ENCODE measurements at regions of chr5 and their contacts with region 1.

Region 1: GRCh38 chr5:683551-684481 is 9.3 kb downstream of the TPPP start:
- DNase-seq: peak in 2 of 9 experiments; percentile 18 to 41
- ATAC-seq: no peak
- H3K4me3 ChIP-seq: no peak overlapping the region
- H3K4me3 Mint-ChIP-seq: no peak overlapping the region
- H3K27ac ChIP-seq: no peak overlapping the region
- H3K27ac Mint-ChIP-seq: no peak overlapping the region
- H3K4me1 ChIP-seq: no peaks in the 10 kb centered on the region
- H3K4me1 Mint-ChIP-seq: no peaks in the 10 kb centered on the region
- H3K27me3 ChIP-seq: no peaks in the 10 kb centered on the region
- H3K27me3 Mint-ChIP-seq: peaks cover 5% of the 10 kb centered on the region
- CTCF ChIP-seq: no peak

Region 2: GRCh38 chr5:392431-392988 is 291.3 kb before region 1 on chr5:
- CTCF ChIA-PET with region 1: no interaction called
- POLR2A ChIA-PET with region 1: no interaction called
- intact Hi-C with region 1: no loop called
- DNase-seq: peak; percentile 10 to 90 (median 62)
- ATAC-seq: peak; percentile 87
- H3K4me3 ChIP-seq: peak overlapping the region in 1 of 2 experiments; percentile 31
- H3K4me3 Mint-ChIP-seq: peak overlapping the region; percentile 76
- H3K27ac ChIP-seq: no peak overlapping the region
- H3K27ac Mint-ChIP-seq: peak overlapping the region; percentile 74
- H3K4me1 ChIP-seq: peaks cover 12% of the 10 kb centered on the region
- H3K4me1 Mint-ChIP-seq: peaks cover 22% of the 10 kb centered on the region
- H3K27me3 ChIP-seq: no peaks in the 10 kb centered on the region
- H3K27me3 Mint-ChIP-seq: peaks cover 2% of the 10 kb centered on the region
- CTCF ChIP-seq: no peak

Region 3: DNA sequence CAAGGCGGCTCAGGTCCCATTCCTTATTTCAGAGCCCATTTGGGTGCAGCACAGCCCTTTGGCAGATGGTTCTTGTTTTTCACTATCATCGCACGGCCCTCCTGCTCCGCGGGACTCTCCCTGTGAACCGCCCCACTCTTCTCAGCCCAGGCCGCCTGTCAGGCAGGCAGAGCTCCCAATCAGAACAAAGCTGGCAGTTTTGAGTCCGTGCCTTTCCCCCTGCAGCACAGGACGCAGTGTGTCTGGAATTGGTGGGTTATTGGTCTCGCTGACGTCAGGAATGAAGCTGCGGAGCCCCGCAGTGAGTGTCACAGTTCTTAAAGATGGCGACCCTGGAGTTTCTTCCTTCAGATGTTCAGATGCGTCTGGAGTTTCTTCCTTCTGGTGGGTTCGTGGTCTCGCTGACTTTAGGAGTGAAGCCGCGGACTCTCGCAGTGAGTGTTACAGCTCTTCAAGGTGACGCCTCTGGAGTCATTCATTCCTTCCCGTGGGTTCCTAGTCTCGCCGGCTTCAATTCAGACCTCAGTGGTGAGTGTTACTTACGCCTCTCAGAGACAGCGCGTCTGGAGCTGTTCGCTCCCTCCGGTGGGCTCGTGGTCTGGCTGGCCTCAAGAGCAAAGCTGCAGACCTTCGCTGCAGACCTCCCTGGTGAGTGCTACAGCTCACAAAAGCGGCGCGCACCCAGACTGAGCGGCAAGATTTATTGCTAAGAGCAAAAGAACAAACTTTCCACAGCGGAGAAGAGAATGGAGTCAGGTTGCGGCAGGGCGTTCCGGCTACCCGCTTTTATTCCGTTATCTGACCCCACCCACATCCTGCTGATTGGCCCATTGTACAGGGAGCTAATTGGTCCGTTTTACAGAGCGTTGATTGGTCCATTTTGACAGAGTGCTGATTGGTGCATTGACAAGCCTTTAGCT is 93.2 kb after region 1 on chr5:
- CTCF ChIA-PET with region 1: no interaction called
- POLR2A ChIA-PET with region 1: no interaction called
- intact Hi-C with region 1: loop called in 1 of 2 experiments (anchors 5 kb)
- DNase-seq: peak in 1 of 9 experiments; percentile 13
- ATAC-seq: no peak
- H3K4me3 ChIP-seq: no peak overlapping the region
- H3K4me3 Mint-ChIP-seq: no peak overlapping the region
- H3K27ac ChIP-seq: no peak overlapping the region
- H3K27ac Mint-ChIP-seq: no peak overlapping the region
- H3K4me1 ChIP-seq: no peaks in the 10 kb centered on the region
- H3K4me1 Mint-ChIP-seq: no peaks in the 10 kb centered on the region
- H3K27me3 ChIP-seq: no peaks in the 10 kb centered on the region
- H3K27me3 Mint-ChIP-seq: no peaks in the 10 kb centered on the region
- CTCF ChIP-seq: no peak